Activated CD4-positive, alpha-beta T cell treated with anti-CD3 and anti-CD28 coated beads, Interleukin-2, amount 10 ng/mL, durations not matched to agents 24 days and 14 days (primary cell): ENCODE measurements at regions of chr6 and their contacts with region 1.

Region 1: DNA sequence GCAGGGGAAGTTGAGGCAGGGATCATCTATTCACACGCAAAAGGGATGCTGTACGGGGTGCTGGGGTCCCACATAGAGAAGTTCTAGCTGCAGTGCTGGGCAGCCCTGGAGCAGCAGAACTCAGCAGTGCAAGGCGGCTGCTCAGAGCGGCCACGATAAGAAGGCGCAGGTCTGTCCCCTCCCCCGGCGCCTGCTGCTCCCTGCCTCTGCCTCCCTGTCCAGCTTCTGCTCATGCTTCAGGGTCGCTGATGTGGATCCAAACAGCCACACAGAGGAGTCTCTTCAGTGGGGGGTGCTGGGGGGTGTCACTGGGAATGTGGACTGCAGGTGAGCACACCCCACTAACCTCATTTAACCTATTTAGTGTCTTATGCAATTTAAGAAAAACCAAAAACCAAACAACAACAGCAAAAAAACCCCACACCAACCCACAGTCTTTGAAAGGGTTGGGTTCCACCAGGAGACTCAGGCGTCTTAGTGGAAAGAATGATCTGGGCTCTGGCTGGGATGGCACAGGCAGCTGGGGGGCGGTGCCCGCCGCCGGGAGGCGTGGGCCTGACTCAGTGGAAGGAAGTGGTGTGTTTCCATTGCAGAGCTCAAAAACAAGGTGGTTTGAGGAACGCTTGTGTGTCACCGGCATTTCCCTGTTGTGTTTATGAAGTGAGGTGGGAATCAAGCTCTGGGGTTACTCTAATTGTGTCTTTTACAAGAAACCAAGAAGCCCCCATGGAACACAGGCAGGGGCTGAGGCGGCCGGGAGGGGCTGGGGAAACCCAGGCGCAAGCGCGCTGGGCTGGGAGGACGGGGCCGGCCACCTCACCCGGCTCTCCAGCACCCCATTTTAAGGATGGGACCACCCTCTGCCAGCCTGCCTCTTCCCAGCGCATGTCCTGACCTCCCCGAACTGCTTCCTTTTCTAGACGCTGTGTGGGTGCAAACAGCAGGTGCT is 55.1 kb downstream of the IRF4 start:
- DNase-seq: peak; percentile 97
- H3K4me3 Mint-ChIP-seq: peak overlapping the region; percentile 73
- H3K27ac Mint-ChIP-seq: peak overlapping the region; percentile 98
- H3K4me1 Mint-ChIP-seq: peaks cover 63% of the 10 kb centered on the region
- H3K27me3 Mint-ChIP-seq: peaks cover 2% of the 10 kb centered on the region

Region 2: DNA sequence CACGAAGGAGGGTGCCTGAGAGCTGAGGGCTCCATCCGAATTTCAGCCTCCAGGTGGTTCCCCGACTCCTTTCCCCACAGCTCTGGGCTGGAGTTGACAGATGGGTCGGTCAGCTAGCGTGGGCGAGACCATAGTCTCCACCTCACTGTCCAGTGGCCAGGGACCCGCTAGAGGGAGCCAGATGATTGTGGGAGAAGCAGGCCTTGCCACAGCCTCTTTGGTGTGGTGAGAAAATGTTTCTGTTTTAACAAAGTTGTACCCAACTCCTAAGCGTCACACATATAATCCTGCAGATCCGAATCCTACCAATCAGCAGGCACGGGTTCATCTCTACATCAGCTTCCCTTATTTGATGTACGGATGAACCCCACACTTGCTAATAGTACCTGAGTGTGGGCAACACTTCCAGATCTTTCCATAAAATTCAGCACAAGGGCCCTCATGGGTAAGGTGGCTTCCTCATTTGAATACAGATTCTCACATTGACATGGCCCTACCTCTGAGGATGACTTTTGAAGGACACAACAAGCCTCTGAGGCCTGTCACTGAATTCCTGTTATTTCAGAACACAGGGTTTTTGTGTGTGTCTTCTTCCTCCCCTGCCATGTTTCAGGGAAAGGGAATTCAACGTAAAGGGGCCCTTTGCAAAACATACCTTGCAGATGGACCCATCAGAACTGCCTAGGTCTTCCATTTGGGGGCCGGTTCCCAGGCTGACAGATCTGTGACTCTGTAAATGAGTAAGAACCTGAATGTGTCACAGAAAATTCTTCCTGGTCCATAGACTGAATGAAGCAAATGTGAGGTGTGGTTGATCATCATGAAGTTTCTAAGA is 257.7 kb before region 1 on chr6:
- intact Hi-C with region 1: loop called (anchors 1 kb)
- DNase-seq: peak; percentile 95
- H3K4me3 Mint-ChIP-seq: peak overlapping the region; percentile 60
- H3K27ac Mint-ChIP-seq: peak overlapping the region; percentile 91
- H3K4me1 Mint-ChIP-seq: peaks cover 48% of the 10 kb centered on the region
- H3K27me3 Mint-ChIP-seq: no peaks in the 10 kb centered on the region

Region 3: GRCh38 chr6:347232-347631 is 99.5 kb before region 1 on chr6:
- intact Hi-C with region 1: no loop called
- DNase-seq: no peak
- H3K4me3 Mint-ChIP-seq: no peak overlapping the region
- H3K27ac Mint-ChIP-seq: no peak overlapping the region
- H3K4me1 Mint-ChIP-seq: peaks cover under 1% of the 10 kb centered on the region
- H3K27me3 Mint-ChIP-seq: no peaks in the 10 kb centered on the region

Region 4: DNA sequence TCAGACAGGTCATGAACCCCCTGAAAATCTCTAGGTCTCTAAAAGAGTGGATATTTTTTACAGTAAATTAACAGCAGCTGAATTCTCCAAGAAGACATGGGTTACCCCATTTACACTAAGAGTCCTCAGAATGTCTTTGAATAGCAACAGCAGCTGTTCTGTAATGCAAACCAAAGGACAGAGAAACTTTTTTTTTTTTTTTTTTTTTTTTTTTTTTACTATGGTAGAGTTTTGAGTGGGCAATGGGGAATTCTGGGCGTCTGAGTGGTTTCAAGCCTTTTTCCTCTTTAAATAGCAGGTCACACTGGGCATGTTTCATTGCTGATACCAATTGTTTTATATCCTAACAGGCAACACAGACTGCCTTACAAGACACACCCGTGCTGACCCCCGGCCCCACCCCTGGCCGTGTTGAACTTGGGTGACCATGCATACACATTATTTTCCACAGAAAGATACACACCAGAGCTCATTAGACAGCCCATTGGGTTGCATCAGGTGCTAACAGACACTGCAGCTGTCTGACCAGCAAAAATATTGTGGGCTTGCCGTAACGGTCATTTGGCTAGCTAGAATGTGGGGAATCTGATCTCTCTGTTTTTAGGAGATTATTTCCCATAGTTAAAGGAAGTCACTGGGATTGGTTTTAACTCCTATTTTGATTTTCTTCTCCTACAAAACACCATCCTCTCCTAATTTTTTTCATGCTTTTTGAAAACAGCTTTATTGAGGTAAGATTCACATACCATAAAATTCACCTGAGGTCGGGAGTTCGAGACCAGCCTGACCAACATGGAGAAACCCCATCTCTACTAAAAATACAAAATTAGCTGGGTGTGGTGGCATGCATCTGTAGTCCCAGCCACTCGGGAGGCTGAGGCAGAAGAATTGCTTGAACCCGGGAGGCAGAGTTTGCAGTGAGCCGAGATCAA is 81.8 kb before region 1 on chr6:
- intact Hi-C with region 1: no loop called
- DNase-seq: no peak
- H3K4me3 Mint-ChIP-seq: no peak overlapping the region
- H3K27ac Mint-ChIP-seq: no peak overlapping the region
- H3K4me1 Mint-ChIP-seq: no peaks in the 10 kb centered on the region
- H3K27me3 Mint-ChIP-seq: peaks cover 8% of the 10 kb centered on the region

Region 5: DNA sequence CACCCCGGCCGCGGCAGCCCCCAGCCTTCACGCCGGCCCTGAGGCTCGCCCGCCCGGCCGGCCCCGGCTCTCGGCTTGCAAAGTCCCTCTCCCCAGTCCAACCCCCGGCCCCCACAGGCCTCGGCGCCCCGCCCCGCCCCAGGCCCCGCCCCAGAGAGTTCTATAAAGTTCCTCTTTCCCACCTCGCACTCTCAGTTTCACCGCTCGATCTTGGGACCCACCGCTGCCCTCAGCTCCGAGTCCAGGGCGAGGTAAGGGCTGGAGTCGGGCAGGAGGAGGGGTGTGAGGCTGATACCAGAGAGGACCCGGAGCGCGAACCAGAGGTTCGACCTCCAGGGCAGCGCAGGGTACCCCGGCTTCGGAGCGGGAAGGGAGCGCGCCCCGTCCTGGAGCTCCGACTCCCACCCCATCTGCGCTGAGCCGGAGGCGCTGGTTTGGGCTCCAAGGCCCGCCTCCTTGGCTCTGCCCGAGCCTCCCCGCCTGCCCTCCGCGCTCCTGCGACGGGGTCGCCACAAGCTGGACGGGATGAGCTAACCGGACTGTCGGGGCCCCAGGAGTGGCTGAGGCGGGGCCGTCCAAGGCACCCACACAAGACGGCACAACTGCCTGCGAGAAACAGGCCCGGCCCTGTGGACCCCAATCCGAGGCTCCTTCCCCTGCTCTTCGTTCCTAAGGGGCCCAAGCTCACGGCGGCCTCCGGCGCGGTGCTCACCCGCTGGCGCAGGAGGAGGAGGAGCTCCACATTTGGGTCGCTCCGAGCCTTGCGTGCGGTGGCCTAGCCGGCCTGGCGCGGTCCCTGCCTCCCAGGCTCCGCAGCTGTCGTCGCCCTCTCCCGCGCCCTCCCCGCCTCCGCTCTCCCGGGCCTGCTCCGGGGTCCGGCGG is 54.9 kb before region 1 on chr6 and contains the start of gene IRF4:
- intact Hi-C with region 1: loop called (anchors 1 kb)
- DNase-seq: peak; percentile 92
- H3K4me3 Mint-ChIP-seq: peak within 1 kb of the TSS; percentile 93
- H3K27ac Mint-ChIP-seq: peak within 1 kb of the TSS; percentile 98
- H3K4me1 Mint-ChIP-seq: peaks cover 40% of the 10 kb centered on the region
- H3K27me3 Mint-ChIP-seq: peaks cover 2% of the 10 kb centered on the region
- total RNA-seq, gene IRF4: 831 and 846 TPM in 2 replicates

Region 6: GRCh38 chr6:422433-423054 is 24.1 kb before region 1 on chr6:
- intact Hi-C with region 1: loop called (anchors 1 kb)
- DNase-seq: peak; percentile 88
- H3K4me3 Mint-ChIP-seq: no peak overlapping the region
- H3K27ac Mint-ChIP-seq: peak overlapping the region; percentile 91
- H3K4me1 Mint-ChIP-seq: peaks cover 30% of the 10 kb centered on the region
- H3K27me3 Mint-ChIP-seq: no peaks in the 10 kb centered on the region

Region 7: DNA sequence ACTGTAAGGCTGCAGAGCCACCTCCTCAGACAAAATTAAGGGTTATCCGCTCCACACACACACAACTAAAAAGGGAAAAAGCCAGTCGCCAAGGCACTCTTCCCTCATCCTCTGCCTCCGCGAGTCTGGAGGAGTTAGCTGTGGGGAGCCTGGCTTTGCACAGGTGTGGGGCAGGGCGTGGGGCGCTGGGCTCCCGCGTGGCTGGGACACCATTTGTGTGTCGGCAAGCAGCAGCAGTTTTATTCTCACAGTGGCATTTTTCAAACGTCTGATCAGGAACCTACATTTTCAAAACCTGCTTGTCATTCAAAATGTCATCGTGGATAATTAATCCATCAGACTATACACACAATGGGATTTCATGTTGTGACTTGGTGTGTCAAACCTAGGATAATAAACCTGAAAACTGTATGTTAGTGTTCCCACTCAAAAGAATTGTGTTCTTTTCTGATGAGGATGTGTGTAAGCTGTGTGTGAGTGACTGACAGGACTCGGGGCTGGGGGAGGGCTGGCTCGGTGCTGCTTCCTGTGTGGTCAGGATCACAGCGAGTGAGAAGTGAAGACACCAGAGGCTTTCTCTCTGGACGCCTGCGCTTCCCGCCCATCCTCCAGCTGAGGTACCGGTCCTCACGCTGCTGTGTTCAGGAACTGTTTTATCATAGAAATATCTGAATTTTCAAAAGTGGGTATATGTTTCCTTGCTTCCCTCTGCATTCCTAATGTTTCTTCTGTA is 27.9 kb after region 1 on chr6:
- intact Hi-C with region 1: loop called (anchors 1 kb)
- DNase-seq: peak; percentile 94
- H3K4me3 Mint-ChIP-seq: peak overlapping the region; percentile 26
- H3K27ac Mint-ChIP-seq: peak overlapping the region; percentile 47
- H3K4me1 Mint-ChIP-seq: peaks cover 70% of the 10 kb centered on the region
- H3K27me3 Mint-ChIP-seq: no peaks in the 10 kb centered on the region

Region 8: GRCh38 chr6:490251-491037 is 43.8 kb after region 1 on chr6:
- intact Hi-C with region 1: loop called (anchors 1 kb)
- DNase-seq: peak; percentile 82
- H3K4me3 Mint-ChIP-seq: peak overlapping the region; percentile 77
- H3K27ac Mint-ChIP-seq: peak overlapping the region; percentile 99
- H3K4me1 Mint-ChIP-seq: peaks cover 87% of the 10 kb centered on the region
- H3K27me3 Mint-ChIP-seq: no peaks in the 10 kb centered on the region

Region 9: DNA sequence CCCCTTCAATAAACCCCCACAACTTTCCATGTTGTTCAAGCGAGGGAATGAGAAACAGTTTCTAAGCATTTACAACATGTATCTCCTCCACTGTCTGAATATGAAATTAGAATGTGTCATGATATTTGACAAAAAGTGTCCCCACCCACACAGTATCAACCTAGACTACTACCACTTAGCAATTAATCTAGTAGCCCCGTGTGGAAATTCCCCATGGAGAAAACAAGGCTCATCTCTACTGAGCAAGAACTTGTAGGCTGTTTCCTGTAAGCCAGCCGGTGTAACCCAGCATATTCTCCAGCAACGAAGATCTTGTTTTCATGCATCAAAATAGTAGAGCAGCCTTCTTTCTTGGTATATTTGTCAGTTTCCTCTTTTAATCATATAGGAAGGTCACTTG is 59.8 kb after region 1 on chr6:
- intact Hi-C with region 1: loop called (anchors 1 kb)
- DNase-seq: peak; percentile 77
- H3K4me3 Mint-ChIP-seq: peak overlapping the region; percentile 75
- H3K27ac Mint-ChIP-seq: peak overlapping the region; percentile 98
- H3K4me1 Mint-ChIP-seq: peaks cover 90% of the 10 kb centered on the region
- H3K27me3 Mint-ChIP-seq: no peaks in the 10 kb centered on the region

Region 10: DNA sequence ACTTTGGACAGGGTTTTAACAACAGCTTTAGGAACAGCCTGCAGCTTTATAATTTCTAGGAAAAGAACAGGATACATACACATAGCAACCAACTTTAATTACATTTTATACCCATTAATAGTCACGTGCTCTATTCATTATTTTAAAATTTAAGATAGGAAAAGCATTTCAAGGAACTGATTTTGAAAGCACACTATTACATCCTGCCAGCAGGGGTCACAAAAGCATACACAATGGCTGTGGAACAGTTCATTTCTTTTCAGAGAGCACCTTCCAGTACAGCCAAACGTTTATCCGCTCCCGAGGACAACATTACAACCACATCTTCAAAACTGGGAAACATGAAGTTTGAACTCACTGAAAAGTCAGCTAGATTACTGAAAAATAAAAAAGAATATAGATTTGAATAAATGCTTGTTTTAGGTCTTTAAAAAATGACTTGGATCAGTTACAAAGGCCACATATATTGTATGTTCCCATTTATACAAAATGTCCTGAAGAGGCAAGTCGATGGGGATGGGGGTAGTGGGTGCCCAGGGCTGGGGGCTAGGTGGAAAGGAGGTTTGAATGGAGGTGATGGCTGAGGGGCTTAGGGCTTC is 350.9 kb after region 1 on chr6:
- intact Hi-C with region 1: no loop called
- DNase-seq: peak; percentile 80
- H3K4me3 Mint-ChIP-seq: no peak overlapping the region
- H3K27ac Mint-ChIP-seq: no peak overlapping the region
- H3K4me1 Mint-ChIP-seq: no peaks in the 10 kb centered on the region
- H3K27me3 Mint-ChIP-seq: peaks cover 61% of the 10 kb centered on the region

Region 11: DNA sequence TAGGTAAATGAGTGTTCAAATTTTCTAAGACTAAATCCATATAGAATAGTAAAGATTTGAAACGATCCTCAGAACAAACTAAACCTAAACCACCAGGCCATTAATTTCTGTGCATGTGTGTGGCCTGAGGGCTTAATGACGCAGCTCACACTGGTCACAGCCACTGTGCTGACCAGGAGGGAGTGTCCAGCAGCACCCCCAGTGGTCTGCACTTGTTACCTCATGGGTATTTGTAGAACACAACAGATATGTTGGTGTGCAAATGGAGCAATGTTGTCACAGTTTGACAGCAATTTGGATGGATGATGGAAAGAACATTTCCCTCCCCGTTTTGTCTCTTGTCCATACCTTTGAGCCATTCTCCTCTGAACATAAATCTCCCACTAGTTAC is 368.7 kb after region 1 on chr6:
- intact Hi-C with region 1: no loop called
- DNase-seq: no peak
- H3K4me3 Mint-ChIP-seq: no peak overlapping the region
- H3K27ac Mint-ChIP-seq: no peak overlapping the region
- H3K4me1 Mint-ChIP-seq: peaks cover 18% of the 10 kb centered on the region
- H3K27me3 Mint-ChIP-seq: peaks cover 6% of the 10 kb centered on the region